ENCODE measurements at regions of chr11 and their contacts with region 1.

Region 1: DNA sequence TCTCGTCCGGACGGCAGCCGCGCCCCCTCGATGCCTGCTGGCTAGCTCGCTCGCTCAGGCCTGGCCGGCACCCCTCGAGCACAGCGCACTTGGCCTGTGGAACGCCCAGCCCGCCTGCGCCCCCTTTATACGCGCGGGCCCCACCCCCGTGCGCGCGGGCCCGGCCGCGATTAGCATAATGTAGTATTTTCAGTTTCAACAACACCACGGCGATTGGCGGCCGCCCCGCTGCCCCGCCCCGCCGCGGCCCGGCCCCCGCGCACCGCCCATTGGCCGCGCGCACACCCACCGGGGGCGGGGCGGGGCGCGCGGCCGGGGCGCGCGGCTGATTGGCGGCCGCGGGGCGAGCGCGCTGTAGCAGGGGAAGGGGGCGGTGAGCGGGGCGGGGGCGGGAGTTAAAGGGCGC is at the start of gene CDKN1C:
- DNase-seq: peak; percentile 81 to 91 (median 86)
- ATAC-seq: peak; percentile 79 to 83 (median 82)
- H3K4me3 ChIP-seq: peak within 1 kb of the TSS; percentile 38 to 75 (median 54)
- H3K27ac ChIP-seq: peak within 1 kb of the TSS in 3 of 4 donors; percentile 46 to 60 (median 49)
- H3K4me1 ChIP-seq: peaks cover under 1 to 2% (median under 1%) of the 10 kb centered on the region in 3 donors
- H3K27me3 ChIP-seq: no peaks in the 10 kb centered on the region
- CTCF ChIP-seq: no peak
- total RNA-seq, gene CDKN1C: 9.2 to 23.1 (median 19.2) TPM

Region 2: DNA sequence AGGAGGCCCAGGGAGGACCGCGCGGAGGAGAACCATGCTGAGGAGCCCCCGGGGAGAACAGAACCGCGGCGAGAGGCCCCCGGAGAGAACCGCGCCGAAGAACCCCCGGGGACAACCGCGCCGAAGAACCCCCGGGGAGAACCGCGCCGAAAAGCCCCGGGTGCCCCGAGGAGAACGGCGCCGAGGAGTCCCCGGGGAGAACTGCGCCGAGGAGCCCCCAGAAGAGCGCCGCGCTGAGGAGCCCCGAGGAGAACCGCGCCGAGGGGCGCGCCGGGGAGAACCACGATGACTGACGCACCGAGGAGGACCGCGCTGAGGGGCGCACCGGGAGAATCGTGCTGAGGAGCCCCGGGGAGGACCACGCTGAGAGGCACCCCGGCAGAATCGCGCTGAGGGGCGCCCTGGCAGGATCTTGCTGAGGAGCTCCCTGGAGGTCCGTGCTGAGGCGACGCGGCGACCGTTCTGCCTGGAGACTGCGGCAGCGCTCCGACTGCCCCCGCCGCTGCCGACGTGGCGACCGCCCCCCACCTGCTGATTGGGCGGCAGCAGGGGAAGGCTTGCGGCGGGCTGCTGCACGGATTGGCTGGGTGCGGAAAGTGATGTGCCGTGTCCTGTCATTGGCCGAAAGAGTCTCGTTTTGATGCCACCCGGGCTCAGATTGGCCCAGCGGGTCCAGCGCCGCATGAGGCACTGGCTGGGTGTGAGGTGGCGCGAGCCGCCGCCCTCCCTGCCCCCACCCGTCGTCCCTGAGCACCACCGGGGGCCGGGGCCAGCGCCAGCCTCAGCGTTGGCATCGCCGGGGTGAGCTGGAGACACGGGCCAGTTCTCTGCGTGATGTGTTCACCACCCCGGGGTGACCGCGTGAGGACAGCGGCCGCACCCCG is 185.9 kb before region 1 on chr11 and contains the start of gene KCNQ1OT1:
- intact Hi-C with region 1: loop called in 2 of 3 experiments (anchors 10 kb)
- DNase-seq: peak; percentile 88 to 95 (median 92)
- ATAC-seq: peak; percentile 89 to 93 (median 92)
- H3K4me3 ChIP-seq: peak within 1 kb of the TSS; percentile 33 to 52 (median 43)
- H3K27ac ChIP-seq: peak within 1 kb of the TSS; percentile 76 to 89 (median 82)
- H3K4me1 ChIP-seq: peaks cover 0 to 4% (median 0%) of the 10 kb centered on the region in 3 donors
- H3K27me3 ChIP-seq: no peaks in the 10 kb centered on the region
- CTCF ChIP-seq: no peak
- total RNA-seq, gene KCNQ1OT1: 0.79 to 1.9 (median 1.5) TPM

Region 3: GRCh38 chr11:2778630-2779498 is 106.8 kb before region 1 on chr11:
- intact Hi-C with region 1: no loop called
- DNase-seq: peak; percentile 84 to 96 (median 88)
- ATAC-seq: peak; percentile 88 to 94 (median 91)
- H3K4me3 ChIP-seq: peak overlapping the region in 2 of 4 donors; percentile 1 to 6
- H3K27ac ChIP-seq: peak overlapping the region; percentile 77 to 84 (median 80)
- H3K4me1 ChIP-seq: peaks cover 35 to 36% (median 35%) of the 10 kb centered on the region in 3 donors
- H3K27me3 ChIP-seq: no peaks in the 10 kb centered on the region
- CTCF ChIP-seq: peak in 1 of 4 donors; percentile 27

Measured in pancreas (tissue), 10 donors.